ENCODE measurements at regions of chr2 and their contacts with region 1.

Region 1: DNA sequence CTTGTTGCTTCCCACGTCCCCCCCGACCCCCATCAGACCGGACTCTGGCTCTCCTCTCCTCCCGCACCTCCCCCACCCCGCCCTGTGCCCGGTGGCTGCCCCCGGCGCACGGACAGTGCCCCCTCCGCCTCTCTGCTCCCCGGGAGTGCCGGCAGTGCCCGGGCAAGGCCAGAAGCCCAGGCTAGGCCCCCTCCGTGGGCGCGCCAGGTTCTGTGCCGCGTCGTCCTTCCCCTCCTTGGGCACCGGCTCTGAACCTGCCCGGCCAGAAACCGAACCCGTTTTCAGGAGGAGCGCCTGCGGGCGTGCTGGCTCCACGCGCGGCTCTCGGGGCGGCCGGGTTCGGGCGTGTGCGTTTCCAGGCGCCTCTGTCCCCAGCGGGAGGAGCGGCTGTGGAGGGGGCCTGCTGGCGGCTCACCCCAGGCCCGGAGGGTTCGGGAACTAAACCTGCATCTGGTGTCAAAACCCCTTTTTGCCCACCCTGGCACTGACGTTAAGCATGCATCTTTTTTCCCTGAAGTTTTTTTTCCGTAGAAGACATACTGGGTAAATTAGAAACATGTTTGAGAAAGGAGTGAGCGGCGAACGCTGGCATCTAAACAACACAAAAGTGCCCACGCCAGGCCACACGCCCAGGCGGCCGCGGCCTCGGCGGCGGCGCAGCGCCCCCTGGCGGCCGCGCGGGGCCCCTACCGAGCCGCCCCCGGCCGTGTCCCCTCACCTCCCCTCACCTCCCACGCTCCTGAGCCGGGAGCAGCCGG is 123.9 kb upstream of the SLC1A4 start:
- DNase-seq: peak; percentile 86
- ATAC-seq: peak; percentile 91
- H3K4me3 ChIP-seq: peak overlapping the region; percentile 78
- H3K27ac ChIP-seq: peak overlapping the region; percentile 91
- H3K4me1 ChIP-seq: peaks cover 10% of the 10 kb centered on the region
- H3K27me3 ChIP-seq: no peaks in the 10 kb centered on the region
- CTCF ChIP-seq: peak; percentile 55

Region 2: GRCh38 chr2:64586883-64587481 is 278.3 kb before region 1 on chr2:
- intact Hi-C with region 1: loop called (anchors 5 kb)
- DNase-seq: no peak
- ATAC-seq: peak; percentile 76
- H3K4me3 ChIP-seq: no peak overlapping the region
- H3K27ac ChIP-seq: no peak overlapping the region
- H3K4me1 ChIP-seq: no peaks in the 10 kb centered on the region
- H3K27me3 ChIP-seq: no peaks in the 10 kb centered on the region
- CTCF ChIP-seq: peak; percentile 63

Region 3: DNA sequence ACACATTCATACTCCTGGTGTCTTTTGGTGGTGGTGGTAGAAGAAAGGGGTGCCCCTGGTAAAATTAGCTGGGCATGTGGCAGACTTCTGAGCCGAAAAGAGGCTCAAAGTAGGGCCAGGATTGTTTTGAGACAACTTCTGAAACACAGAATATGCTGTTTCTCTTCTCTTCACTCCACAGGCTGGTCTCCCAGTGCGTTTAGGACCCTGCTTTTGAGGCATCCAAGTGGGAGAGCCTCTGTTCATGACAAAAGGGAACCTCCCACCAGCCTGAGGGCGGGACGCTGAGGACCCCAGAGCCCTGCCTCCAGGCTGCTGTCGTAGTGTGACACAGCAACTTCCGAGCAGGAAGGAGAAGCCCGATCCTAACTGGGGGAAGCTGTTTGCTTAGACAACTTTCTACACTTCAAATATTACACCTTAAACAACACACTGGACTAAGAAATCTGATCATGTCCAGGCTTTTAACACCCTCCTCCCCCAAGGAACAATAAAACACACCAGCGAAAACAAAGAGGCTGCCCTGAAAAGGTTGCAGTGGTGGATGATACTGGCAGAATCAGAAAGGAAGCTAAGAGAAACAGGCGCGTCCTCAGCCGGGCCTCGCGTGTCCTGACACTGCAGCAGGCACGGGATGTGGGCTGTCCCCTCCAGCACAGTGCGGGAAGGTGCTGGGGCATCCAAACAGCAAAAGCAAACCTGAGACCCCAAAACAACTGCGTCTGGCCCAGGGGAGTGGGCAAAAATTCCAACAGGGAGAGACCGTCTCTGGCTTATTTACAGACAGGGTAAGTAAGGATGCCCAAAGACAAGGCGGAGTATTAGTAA is 220.9 kb before region 1 on chr2:
- intact Hi-C with region 1: loop called (anchors 10 kb)
- DNase-seq: peak; percentile 84
- ATAC-seq: peak; percentile 87
- H3K4me3 ChIP-seq: peak overlapping the region; percentile 51
- H3K27ac ChIP-seq: peak overlapping the region; percentile 88
- H3K4me1 ChIP-seq: peaks cover 43% of the 10 kb centered on the region
- H3K27me3 ChIP-seq: no peaks in the 10 kb centered on the region
- CTCF ChIP-seq: no peak